ENCODE measurements at regions of chr1 and their contacts with region 1.

Region 1: GRCh38 chr1:160830321-160831153 is 32.1 kb downstream of the CD244 start:
- DNase-seq: peak; percentile 85
- H3K4me3 Mint-ChIP-seq: no peak overlapping the region
- H3K27ac Mint-ChIP-seq: no peak overlapping the region
- H3K4me1 Mint-ChIP-seq: peaks cover 23% of the 10 kb centered on the region
- H3K27me3 Mint-ChIP-seq: no peaks in the 10 kb centered on the region
- CTCF ChIP-seq: peak; percentile 90

Region 2: GRCh38 chr1:160726498-160727315 is 103.8 kb before region 1 on chr1:
- CTCF ChIA-PET with region 1: interaction called, 134 read pairs
- POLR2A ChIA-PET with region 1: interaction called, 5 read pairs
- intact Hi-C with region 1: loop called (anchors 1 kb)
- DNase-seq: peak; percentile 90
- H3K4me3 Mint-ChIP-seq: no peak overlapping the region
- H3K27ac Mint-ChIP-seq: no peak overlapping the region
- H3K4me1 Mint-ChIP-seq: no peaks in the 10 kb centered on the region
- H3K27me3 Mint-ChIP-seq: no peaks in the 10 kb centered on the region
- CTCF ChIP-seq: peak; percentile 91

Region 3: DNA sequence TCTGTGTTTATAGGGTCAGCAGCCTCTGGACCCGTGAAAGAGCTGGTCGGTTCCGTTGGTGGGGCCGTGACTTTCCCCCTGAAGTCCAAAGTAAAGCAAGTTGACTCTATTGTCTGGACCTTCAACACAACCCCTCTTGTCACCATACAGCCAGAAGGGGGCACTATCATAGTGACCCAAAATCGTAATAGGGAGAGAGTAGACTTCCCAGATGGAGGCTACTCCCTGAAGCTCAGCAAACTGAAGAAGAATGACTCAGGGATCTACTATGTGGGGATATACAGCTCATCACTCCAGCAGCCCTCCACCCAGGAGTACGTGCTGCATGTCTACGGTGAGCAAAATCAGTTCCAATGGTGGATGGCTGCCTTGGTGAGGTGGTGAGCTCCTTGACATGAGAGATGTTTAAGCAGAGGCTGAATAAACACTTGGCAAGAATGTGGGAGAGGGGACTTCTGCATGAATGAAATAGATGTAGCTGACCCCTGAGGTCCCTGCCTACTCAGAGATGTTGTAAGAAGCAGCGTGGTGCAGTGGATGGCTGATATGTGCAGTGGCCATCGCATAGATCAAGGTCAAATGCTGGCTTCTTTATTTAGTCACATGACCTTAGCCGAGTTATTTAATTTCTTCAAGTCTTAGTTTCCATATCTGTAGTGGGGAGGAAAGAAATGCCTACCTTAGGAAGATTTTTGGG is 82.2 kb before region 1 on chr1:
- CTCF ChIA-PET with region 1: interaction called, 4 read pairs
- POLR2A ChIA-PET with region 1: no interaction called
- intact Hi-C with region 1: loop called (anchors 1 kb)
- DNase-seq: peak; percentile 70
- H3K4me3 Mint-ChIP-seq: no peak overlapping the region
- H3K27ac Mint-ChIP-seq: no peak overlapping the region
- H3K4me1 Mint-ChIP-seq: peaks cover 12% of the 10 kb centered on the region
- H3K27me3 Mint-ChIP-seq: no peaks in the 10 kb centered on the region
- CTCF ChIP-seq: peak; percentile 45

Region 4: GRCh38 chr1:160795951-160796383 is 34.6 kb before region 1 on chr1 and contains the start of gene LY9:
- CTCF ChIA-PET with region 1: interaction called, 27 read pairs
- POLR2A ChIA-PET with region 1: interaction called, 5 read pairs
- intact Hi-C with region 1: no loop called
- DNase-seq: no peak
- H3K4me3 Mint-ChIP-seq: no peak within 1 kb of the TSS
- H3K27ac Mint-ChIP-seq: no peak within 1 kb of the TSS
- H3K4me1 Mint-ChIP-seq: peaks cover 7% of the 10 kb centered on the region
- H3K27me3 Mint-ChIP-seq: no peaks in the 10 kb centered on the region
- CTCF ChIP-seq: no peak
- total RNA-seq, gene LY9: not detected in 2 replicates

Region 5: GRCh38 chr1:160987359-160988062 is 157.0 kb after region 1 on chr1:
- CTCF ChIA-PET with region 1: interaction called, 109 read pairs
- POLR2A ChIA-PET with region 1: no interaction called
- intact Hi-C with region 1: loop called (anchors 1 kb)
- DNase-seq: no peak
- H3K4me3 Mint-ChIP-seq: no peak overlapping the region
- H3K27ac Mint-ChIP-seq: no peak overlapping the region
- H3K4me1 Mint-ChIP-seq: no peaks in the 10 kb centered on the region
- H3K27me3 Mint-ChIP-seq: no peaks in the 10 kb centered on the region
- CTCF ChIP-seq: no peak

Measured in MCF 10A (cell line).